Activated CD4-positive, alpha-beta memory T cell treated with anti-CD3 and anti-CD28 coated beads for 36 hours (primary cell): ENCODE measurements at regions of chr2 and their contacts with region 1.

Region 1: GRCh38 chr2:12931186-12931844 is 214.6 kb downstream of the TRIB2 start:
- DNase-seq: no peak
- H3K4me3 Mint-ChIP-seq: no peak overlapping the region
- H3K27ac Mint-ChIP-seq: no peak overlapping the region
- H3K4me1 Mint-ChIP-seq: peaks cover 17% of the 10 kb centered on the region
- H3K27me3 Mint-ChIP-seq: no peaks in the 10 kb centered on the region

Region 2: GRCh38 chr2:11863513-11864328 is 1067.6 kb before region 1 on chr2:
- CTCF ChIA-PET with region 1: interaction called, 14 read pairs
- POLR2A ChIA-PET with region 1: no interaction called
- intact Hi-C with region 1: no loop called
- DNase-seq: peak; percentile 76
- H3K4me3 Mint-ChIP-seq: peak overlapping the region; percentile 25
- H3K27ac Mint-ChIP-seq: no peak overlapping the region
- H3K4me1 Mint-ChIP-seq: peaks cover 41% of the 10 kb centered on the region
- H3K27me3 Mint-ChIP-seq: no peaks in the 10 kb centered on the region

Region 3: DNA sequence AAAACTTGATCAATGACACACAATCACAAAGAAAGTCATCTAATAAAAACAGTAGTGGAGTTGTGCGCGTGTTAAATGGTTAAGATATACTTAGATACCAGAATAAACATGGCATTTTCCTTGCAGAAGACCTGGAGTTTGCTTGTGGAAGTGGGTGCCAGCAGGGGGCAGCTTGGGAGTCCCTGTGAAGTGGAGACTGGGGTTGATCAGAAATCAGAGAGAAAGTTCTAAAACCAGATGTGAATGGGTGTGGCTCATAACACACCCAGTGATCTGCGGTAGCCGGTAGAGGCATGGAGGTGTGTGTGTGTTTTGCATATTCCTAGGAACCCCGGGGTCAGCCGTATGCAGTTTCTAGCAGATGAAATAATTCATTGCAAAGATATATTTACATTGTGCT is 514.7 kb before region 1 on chr2:
- CTCF ChIA-PET with region 1: interaction called, 5 read pairs
- POLR2A ChIA-PET with region 1: no interaction called
- intact Hi-C with region 1: loop called (anchors 10 kb)
- DNase-seq: peak; percentile 69
- H3K4me3 Mint-ChIP-seq: no peak overlapping the region
- H3K27ac Mint-ChIP-seq: no peak overlapping the region
- H3K4me1 Mint-ChIP-seq: peaks cover 43% of the 10 kb centered on the region
- H3K27me3 Mint-ChIP-seq: no peaks in the 10 kb centered on the region

Region 4: DNA sequence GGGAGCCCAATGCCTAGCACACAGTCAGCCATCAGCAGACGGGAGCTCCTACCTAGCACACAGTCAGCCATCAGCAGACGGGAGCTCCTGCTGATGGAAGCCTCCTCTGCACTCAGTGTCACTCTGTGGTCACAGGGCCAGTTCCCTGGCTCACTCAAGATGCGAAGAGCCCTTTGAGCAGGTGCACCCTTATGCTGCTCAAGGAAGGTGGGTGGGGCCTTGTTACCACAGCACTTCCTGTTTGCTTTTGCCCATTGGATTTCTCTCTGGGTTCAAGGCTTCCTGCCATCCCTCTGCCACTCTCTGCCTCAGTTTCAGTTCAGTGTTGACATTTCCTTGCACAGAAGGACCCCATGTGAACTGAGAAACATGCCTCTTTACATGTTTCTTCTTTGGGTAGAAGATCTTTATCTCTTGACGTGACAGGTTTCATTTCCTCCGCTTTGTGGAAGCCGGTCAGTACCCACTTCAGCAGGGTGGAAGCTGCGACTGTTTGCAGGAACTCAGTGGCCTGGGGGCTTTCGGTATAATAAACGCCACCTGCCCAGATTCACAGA is 203.0 kb before region 1 on chr2:
- CTCF ChIA-PET with region 1: interaction called, 38 read pairs
- POLR2A ChIA-PET with region 1: no interaction called
- intact Hi-C with region 1: no loop called
- DNase-seq: peak; percentile 78
- H3K4me3 Mint-ChIP-seq: peak overlapping the region; percentile 46
- H3K27ac Mint-ChIP-seq: peak overlapping the region; percentile 70
- H3K4me1 Mint-ChIP-seq: peaks cover 83% of the 10 kb centered on the region
- H3K27me3 Mint-ChIP-seq: no peaks in the 10 kb centered on the region

Region 5: DNA sequence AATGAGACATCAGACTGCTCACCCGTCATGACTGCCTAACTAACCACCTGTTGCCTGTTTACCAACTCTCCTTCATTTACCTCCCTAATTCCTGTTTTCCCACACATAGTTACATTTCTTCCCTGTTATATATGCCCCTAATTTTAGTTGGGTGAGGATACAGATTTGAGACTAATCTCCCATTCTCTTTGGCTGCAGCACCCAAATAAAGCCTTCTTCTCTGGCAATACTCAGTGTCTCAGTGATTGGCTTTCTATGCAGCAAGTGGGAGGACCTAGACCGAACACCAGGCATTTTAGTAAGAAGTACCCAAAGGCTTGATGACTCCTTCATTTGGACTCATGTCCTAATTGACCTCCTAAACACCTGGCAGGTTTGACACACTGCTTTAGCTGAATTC is 67.4 kb before region 1 on chr2:
- CTCF ChIA-PET with region 1: interaction called, 3 read pairs
- POLR2A ChIA-PET with region 1: no interaction called
- intact Hi-C with region 1: loop called (anchors 1 kb)
- DNase-seq: no peak
- H3K4me3 Mint-ChIP-seq: no peak overlapping the region
- H3K27ac Mint-ChIP-seq: no peak overlapping the region
- H3K4me1 Mint-ChIP-seq: peaks cover 19% of the 10 kb centered on the region
- H3K27me3 Mint-ChIP-seq: no peaks in the 10 kb centered on the region

Region 6: GRCh38 chr2:13289310-13289709 is 358.0 kb after region 1 on chr2:
- CTCF ChIA-PET with region 1: no interaction called
- POLR2A ChIA-PET with region 1: no interaction called
- intact Hi-C with region 1: no loop called
- DNase-seq: no peak
- H3K4me3 Mint-ChIP-seq: no peak overlapping the region
- H3K27ac Mint-ChIP-seq: no peak overlapping the region
- H3K4me1 Mint-ChIP-seq: no peaks in the 10 kb centered on the region
- H3K27me3 Mint-ChIP-seq: no peaks in the 10 kb centered on the region